ENCODE measurements at regions of chr1 and their contacts with region 1.

Region 1: GRCh38 chr1:2525920-2526823 is at the start of gene PANK4:
- DNase-seq: peak; percentile 77 to 96 (median 87)
- ATAC-seq: peak; percentile 85
- H3K4me3 ChIP-seq: peak within 1 kb of the TSS; percentile 85 to 98
- H3K4me3 Mint-ChIP-seq: peak within 1 kb of the TSS; percentile 98
- H3K27ac ChIP-seq: peak within 1 kb of the TSS; percentile 50 to 76
- H3K27ac Mint-ChIP-seq: peak within 1 kb of the TSS; percentile 97
- H3K4me1 ChIP-seq: peaks cover 66% of the 10 kb centered on the region
- H3K4me1 Mint-ChIP-seq: peaks cover 49% of the 10 kb centered on the region
- H3K27me3 ChIP-seq: peaks cover 7 to 14% of the 10 kb centered on the region in 2 experiments
- H3K27me3 Mint-ChIP-seq: peaks cover 2% of the 10 kb centered on the region
- CTCF ChIP-seq: no peak
- total RNA-seq, gene PANK4: 44.1 to 44.8 TPM

Region 2: DNA sequence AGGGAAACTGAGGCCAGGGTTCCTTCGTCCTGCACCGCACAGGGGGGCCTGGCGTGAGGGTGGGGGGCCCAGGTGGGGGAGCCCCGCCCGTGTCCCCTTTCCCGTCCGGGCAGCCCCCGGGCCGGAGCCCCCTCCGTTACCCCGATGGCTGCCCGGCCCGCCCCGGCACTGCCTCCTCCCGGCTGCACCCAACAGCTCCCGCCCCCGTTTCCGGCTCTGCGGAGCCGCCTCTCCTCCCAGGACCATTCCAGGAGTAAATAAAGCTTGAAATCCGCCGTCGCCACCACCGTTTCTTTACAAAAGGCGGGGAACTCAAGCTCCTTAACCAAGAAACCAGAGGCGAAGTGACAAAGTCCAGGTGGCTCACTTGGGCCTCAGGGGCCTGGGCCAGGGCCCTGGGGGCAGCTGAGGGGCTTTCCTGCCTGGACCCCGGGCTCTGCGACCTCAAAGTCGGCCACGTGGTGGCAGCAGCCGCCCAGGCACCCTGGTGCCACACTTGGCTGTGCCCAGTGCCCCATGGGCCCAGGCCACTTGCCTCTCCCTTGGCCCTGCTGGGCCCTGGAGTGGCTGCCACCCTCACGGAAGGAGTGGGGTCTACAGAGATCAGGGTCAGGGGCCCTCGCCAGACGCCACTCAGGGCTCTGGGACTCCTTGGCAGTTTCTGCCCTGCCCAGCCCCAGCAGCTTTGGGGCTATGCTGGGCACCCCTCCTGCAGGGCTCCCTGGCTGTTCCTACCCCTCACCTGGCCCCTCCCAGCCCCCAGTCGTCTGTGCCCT is 331.1 kb before region 1 on chr1:
- CTCF ChIA-PET with region 1: interaction called, 8 read pairs
- POLR2A ChIA-PET with region 1: interaction called, 13 read pairs
- intact Hi-C with region 1: loop called in 1 of 2 experiments (anchors 2 kb)
- DNase-seq: peak; percentile 81 to 97 (median 88)
- ATAC-seq: peak; percentile 71
- H3K4me3 ChIP-seq: peak overlapping the region; percentile 64 to 66
- H3K4me3 Mint-ChIP-seq: peak overlapping the region; percentile 87
- H3K27ac ChIP-seq: peak overlapping the region; percentile 77 to 93
- H3K27ac Mint-ChIP-seq: peak overlapping the region; percentile 93
- H3K4me1 ChIP-seq: peaks cover 42% of the 10 kb centered on the region
- H3K4me1 Mint-ChIP-seq: peaks cover 34% of the 10 kb centered on the region
- H3K27me3 ChIP-seq: no peaks in the 10 kb centered on the region
- H3K27me3 Mint-ChIP-seq: no peaks in the 10 kb centered on the region
- CTCF ChIP-seq: peak; percentile 79

Region 3: GRCh38 chr1:2314803-2315673 is 211.1 kb before region 1 on chr1:
- CTCF ChIA-PET with region 1: no interaction called
- POLR2A ChIA-PET with region 1: no interaction called
- intact Hi-C with region 1: loop called in 1 of 2 experiments (anchors 10 kb)
- DNase-seq: peak; percentile 52 to 89 (median 73)
- ATAC-seq: peak; percentile 50
- H3K4me3 ChIP-seq: peak overlapping the region; percentile 52 to 58
- H3K4me3 Mint-ChIP-seq: peak overlapping the region; percentile 64
- H3K27ac ChIP-seq: peak overlapping the region; percentile 70 to 82
- H3K27ac Mint-ChIP-seq: peak overlapping the region; percentile 79
- H3K4me1 ChIP-seq: peaks cover 76% of the 10 kb centered on the region
- H3K4me1 Mint-ChIP-seq: peaks cover 33% of the 10 kb centered on the region
- H3K27me3 ChIP-seq: no peaks in the 10 kb centered on the region
- H3K27me3 Mint-ChIP-seq: no peaks in the 10 kb centered on the region
- CTCF ChIP-seq: peak; percentile 97

Region 4: GRCh38 chr1:2451744-2452143 is 74.4 kb before region 1 on chr1:
- CTCF ChIA-PET with region 1: no interaction called
- POLR2A ChIA-PET with region 1: no interaction called
- intact Hi-C with region 1: no loop called
- DNase-seq: no peak
- ATAC-seq: no peak
- H3K4me3 ChIP-seq: no peak overlapping the region
- H3K4me3 Mint-ChIP-seq: no peak overlapping the region
- H3K27ac ChIP-seq: no peak overlapping the region
- H3K27ac Mint-ChIP-seq: no peak overlapping the region
- H3K4me1 ChIP-seq: no peaks in the 10 kb centered on the region
- H3K4me1 Mint-ChIP-seq: no peaks in the 10 kb centered on the region
- H3K27me3 ChIP-seq: no peaks in the 10 kb centered on the region
- H3K27me3 Mint-ChIP-seq: no peaks in the 10 kb centered on the region
- CTCF ChIP-seq: no peak

Region 5: DNA sequence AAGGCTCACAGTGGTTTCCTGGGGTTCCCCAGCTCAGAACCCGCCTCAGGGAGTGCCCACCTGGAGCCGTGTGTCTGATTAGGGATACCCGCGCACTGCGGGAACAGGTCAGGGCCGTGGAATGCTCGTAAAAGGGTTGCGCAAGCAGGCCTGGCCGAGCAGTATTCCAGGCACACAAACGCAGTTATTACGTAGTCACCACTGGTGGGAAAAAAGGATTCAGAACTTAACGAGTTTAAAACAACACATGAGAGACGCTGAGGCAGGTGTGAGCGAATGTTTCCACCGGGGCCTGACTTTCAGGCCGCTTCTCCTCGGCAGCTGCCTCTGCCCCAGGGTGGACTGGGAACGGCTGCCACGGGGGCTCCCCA is 31.9 kb before region 1 on chr1:
- CTCF ChIA-PET with region 1: interaction called, 5 read pairs
- POLR2A ChIA-PET with region 1: interaction called, 14 read pairs
- intact Hi-C with region 1: no loop called
- DNase-seq: no peak
- ATAC-seq: no peak
- H3K4me3 ChIP-seq: peak overlapping the region in 1 of 2 experiments; percentile 35
- H3K4me3 Mint-ChIP-seq: peak overlapping the region; percentile 55
- H3K27ac ChIP-seq: peak overlapping the region in 1 of 2 experiments; percentile 2
- H3K27ac Mint-ChIP-seq: peak overlapping the region; percentile 80
- H3K4me1 ChIP-seq: peaks cover 59% of the 10 kb centered on the region
- H3K4me1 Mint-ChIP-seq: peaks cover 37% of the 10 kb centered on the region
- H3K27me3 ChIP-seq: no peaks in the 10 kb centered on the region
- H3K27me3 Mint-ChIP-seq: no peaks in the 10 kb centered on the region
- CTCF ChIP-seq: no peak

Region 6: DNA sequence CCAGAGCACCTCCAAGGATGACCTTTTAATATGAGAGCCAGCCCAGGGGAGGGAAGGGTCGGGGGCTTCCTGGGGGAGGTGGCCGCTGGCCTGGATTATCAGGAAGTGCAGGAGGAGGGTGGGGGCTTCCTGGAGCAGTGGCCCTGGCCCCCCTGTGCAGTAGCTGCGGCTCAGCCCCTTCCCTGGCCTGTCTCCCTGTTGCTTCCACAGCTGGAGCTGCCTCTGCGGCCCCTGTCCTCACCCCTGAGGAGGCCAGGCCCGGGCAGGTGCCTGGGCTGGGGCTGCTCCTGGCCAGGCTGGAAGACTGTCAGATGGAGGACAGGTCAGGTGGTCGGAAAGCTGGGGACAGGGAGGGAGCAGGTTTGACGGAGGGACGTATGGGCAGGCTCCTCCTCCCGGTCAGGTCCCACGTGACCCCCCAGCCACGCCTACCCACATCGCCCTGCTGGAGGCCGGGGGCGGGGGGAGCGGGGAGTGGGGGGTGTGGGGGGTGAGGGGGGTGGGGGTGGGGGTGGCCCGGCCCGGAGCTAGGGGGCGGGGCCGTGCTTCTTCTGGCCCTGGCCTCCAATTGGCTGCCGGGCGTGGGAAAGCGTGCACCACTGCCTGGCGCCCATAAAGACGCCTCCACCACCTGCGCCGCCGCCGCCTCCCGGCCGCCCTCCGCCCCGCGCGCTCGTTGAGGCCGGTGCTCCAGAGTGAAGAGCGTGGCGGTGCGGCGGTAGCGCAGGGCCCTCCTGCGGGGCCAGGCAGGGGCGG is 19.8 kb after region 1 on chr1:
- CTCF ChIA-PET with region 1: interaction called, 45 read pairs
- POLR2A ChIA-PET with region 1: interaction called, 174 read pairs
- intact Hi-C with region 1: loop called (anchors 1 kb)
- DNase-seq: peak; percentile 85 to 96 (median 89)
- ATAC-seq: peak; percentile 42
- H3K4me3 ChIP-seq: peak overlapping the region; percentile 87 to 91
- H3K4me3 Mint-ChIP-seq: peak overlapping the region; percentile 91
- H3K27ac ChIP-seq: peak overlapping the region; percentile 79 to 99
- H3K27ac Mint-ChIP-seq: peak overlapping the region; percentile 96
- H3K4me1 ChIP-seq: peaks cover 40% of the 10 kb centered on the region
- H3K4me1 Mint-ChIP-seq: peaks cover 31% of the 10 kb centered on the region
- H3K27me3 ChIP-seq: no peaks in the 10 kb centered on the region
- H3K27me3 Mint-ChIP-seq: no peaks in the 10 kb centered on the region
- CTCF ChIP-seq: no peak

Region 7: GRCh38 chr1:2586154-2587070 is 60.2 kb after region 1 on chr1 and contains the start of gene PRXL2B:
- CTCF ChIA-PET with region 1: interaction called, 8 read pairs
- POLR2A ChIA-PET with region 1: interaction called, 12 read pairs
- intact Hi-C with region 1: loop called (anchors 1 kb)
- DNase-seq: peak; percentile 94 to 99 (median 97)
- ATAC-seq: peak; percentile 69
- H3K4me3 ChIP-seq: peak within 1 kb of the TSS; percentile 79 to 95
- H3K4me3 Mint-ChIP-seq: peak within 1 kb of the TSS; percentile 93
- H3K27ac ChIP-seq: peak within 1 kb of the TSS; percentile 95 to 98
- H3K27ac Mint-ChIP-seq: peak within 1 kb of the TSS; percentile 99
- H3K4me1 ChIP-seq: peaks cover 37% of the 10 kb centered on the region
- H3K4me1 Mint-ChIP-seq: peaks cover 40% of the 10 kb centered on the region
- H3K27me3 ChIP-seq: no peaks in the 10 kb centered on the region
- H3K27me3 Mint-ChIP-seq: no peaks in the 10 kb centered on the region
- CTCF ChIP-seq: no peak
- total RNA-seq, gene PRXL2B: 13.5 to 15.9 TPM

Region 8: DNA sequence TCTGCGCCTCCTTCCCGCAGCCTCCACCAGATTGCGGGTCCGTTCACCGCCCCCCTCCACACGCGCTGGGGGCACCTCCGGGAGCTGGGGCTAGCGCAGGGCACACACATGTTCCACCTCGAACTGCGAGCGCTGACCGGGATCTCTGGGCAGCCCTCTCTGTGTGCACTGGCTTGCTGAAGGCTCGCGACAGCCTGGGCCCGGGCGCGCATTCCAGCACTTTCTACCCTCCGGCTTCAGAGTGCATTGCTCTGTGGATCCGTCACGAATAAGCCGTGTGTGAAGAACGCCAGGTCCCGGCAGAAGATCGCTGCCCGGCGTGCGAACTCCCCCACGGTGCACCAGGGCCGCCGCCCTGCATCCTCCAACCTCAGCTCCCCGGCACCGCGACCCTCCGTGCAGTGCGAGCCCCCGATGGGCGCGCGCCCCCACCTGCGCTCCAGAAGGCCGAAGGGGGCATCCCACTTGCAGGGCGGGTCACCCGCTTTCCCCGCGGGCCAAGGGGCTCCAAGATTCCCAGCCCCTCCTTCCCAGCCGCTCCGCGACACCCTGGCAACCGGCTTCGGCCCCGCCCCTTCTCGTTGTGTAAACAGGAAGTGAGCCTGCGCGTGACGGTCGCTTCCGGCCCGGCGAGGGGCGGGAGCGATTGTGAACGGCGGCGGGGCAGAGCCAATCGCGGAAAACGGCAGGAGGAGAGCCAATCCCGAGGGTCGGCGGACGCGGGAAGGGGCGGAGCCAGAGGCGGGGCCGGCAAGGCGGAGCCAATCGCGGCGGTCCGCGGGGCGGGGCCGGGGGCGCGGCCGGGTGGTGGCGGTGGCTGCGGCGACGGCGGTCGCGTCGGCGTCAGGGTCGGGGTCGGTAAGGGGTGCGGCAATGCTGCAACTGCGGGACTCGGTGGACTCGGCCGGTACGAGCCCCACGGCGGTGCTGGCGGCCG is 1098.3 kb after region 1 on chr1 and contains the start of gene TPRG1L:
- CTCF ChIA-PET with region 1: no interaction called
- POLR2A ChIA-PET with region 1: no interaction called
- intact Hi-C with region 1: loop called in 1 of 2 experiments (anchors 10 kb)
- DNase-seq: peak; percentile 97 to 99 (median 98)
- ATAC-seq: peak; percentile 93
- H3K4me3 ChIP-seq: peak within 1 kb of the TSS; percentile 72 to 100
- H3K4me3 Mint-ChIP-seq: peak within 1 kb of the TSS; percentile 98
- H3K27ac ChIP-seq: peak within 1 kb of the TSS; percentile 61 to 89
- H3K27ac Mint-ChIP-seq: peak within 1 kb of the TSS; percentile 98
- H3K4me1 ChIP-seq: peaks cover 29% of the 10 kb centered on the region
- H3K4me1 Mint-ChIP-seq: peaks cover 40% of the 10 kb centered on the region
- H3K27me3 ChIP-seq: no peaks in the 10 kb centered on the region
- H3K27me3 Mint-ChIP-seq: no peaks in the 10 kb centered on the region
- CTCF ChIP-seq: no peak
- total RNA-seq, gene TPRG1L: 39.0 to 39.8 TPM